ENCODE measurements at regions of chr11 and their contacts with region 1.

Region 1: GRCh38 chr11:130118636-130119387 is 40.8 kb upstream of the ST14 start:
- DNase-seq: peak; percentile 83
- H3K4me3 ChIP-seq: peak overlapping the region; percentile 61
- H3K27ac ChIP-seq: peak overlapping the region; percentile 90
- H3K4me1 ChIP-seq: peaks cover 89% of the 10 kb centered on the region
- CTCF ChIP-seq: no peak

Region 2: DNA sequence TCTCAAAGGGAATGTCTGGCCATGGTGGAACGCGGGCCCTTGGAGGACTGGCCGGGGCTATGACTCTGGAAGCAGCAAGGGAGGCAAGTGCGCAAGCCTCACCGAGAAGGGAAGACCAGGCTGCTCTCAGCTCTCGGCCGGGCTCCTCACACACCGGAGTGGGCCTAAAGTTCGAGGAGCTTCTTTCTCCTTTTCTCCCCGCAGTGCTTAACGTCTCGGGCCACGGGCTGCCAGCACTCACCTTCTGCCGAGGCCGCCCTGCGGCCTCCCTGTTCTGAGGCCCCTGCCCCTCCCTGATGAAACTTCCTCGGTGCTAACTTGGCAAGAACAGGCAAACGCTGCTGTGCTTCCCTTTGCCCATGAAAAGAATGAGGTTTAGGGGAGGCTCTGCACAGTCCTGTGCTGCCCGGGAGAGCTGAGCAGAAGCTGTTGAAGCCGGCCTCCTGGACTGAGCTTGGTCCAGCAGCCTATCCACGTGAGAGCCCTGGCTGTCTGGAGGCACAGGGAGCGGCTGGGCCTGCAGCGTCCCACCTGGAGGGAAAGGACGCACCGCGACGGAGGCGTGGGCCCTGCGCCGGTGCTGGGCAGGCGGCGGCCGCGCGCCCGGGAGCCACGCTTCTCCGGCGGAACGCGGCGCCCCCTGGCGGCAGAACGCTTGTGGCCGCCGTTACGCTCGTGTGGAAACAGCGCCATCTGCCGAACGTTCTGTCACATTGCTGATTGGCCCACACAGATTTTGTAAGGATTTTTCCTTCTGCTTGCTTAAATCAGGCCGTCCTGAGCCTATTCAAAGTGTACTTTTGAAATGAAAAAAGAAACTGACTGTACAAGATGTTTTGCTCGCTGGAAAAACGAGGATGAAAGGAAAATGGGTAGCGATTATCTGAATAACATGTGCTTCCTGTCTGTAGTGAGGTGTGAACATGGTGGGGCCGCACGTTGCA is 368.2 kb before region 1 on chr11:
- CTCF ChIA-PET with region 1: no interaction called
- POLR2A ChIA-PET with region 1: no interaction called
- intact Hi-C with region 1: no loop called
- DNase-seq: peak; percentile 75
- H3K4me3 ChIP-seq: no peak overlapping the region
- H3K27ac ChIP-seq: no peak overlapping the region
- H3K4me1 ChIP-seq: no peaks in the 10 kb centered on the region
- CTCF ChIP-seq: peak; percentile 93

Region 3: DNA sequence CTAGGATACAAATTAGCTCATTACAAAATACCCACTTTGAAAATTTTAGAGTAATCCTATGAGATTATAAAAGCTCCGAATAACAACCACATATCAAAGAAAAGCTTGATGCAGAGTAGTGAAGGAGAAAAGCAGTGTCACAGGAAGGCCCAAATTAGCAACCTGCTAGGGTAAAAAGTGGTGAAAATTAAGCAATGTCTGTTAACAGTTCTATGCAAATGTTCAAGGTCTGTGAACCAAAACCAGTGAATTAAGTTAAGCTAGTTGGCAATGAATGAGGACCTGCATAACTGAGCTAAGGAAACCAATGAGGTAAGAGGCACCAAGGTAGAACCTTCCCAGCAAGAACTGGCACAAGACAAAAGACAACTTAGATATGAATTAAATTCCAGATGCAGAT is 145.7 kb before region 1 on chr11:
- CTCF ChIA-PET with region 1: no interaction called
- POLR2A ChIA-PET with region 1: interaction called, 14 read pairs
- intact Hi-C with region 1: no loop called
- DNase-seq: peak; percentile 94
- H3K4me3 ChIP-seq: peak overlapping the region; percentile 60
- H3K27ac ChIP-seq: peak overlapping the region; percentile 98
- H3K4me1 ChIP-seq: peaks cover 88% of the 10 kb centered on the region
- CTCF ChIP-seq: no peak

Region 4: GRCh38 chr11:130069684-130070108 is 49.1 kb before region 1 on chr11 and contains the start of gene APLP2:
- CTCF ChIA-PET with region 1: no interaction called
- POLR2A ChIA-PET with region 1: interaction called, 28 read pairs
- intact Hi-C with region 1: loop called (anchors 1 kb)
- DNase-seq: peak; percentile 99
- H3K4me3 ChIP-seq: peak within 1 kb of the TSS; percentile 81
- H3K27ac ChIP-seq: peak within 1 kb of the TSS; percentile 57
- H3K4me1 ChIP-seq: peaks cover 49% of the 10 kb centered on the region
- CTCF ChIP-seq: no peak
- total RNA-seq, gene APLP2: 144 and 147 TPM in 2 replicates

Region 5: GRCh38 chr11:130159657-130160497 is 41.1 kb after region 1 on chr11 and contains the start of gene ST14:
- CTCF ChIA-PET with region 1: no interaction called
- POLR2A ChIA-PET with region 1: interaction called, 7 read pairs
- intact Hi-C with region 1: loop called (anchors 2 kb)
- DNase-seq: peak; percentile 70
- H3K4me3 ChIP-seq: peak within 1 kb of the TSS; percentile 74
- H3K27ac ChIP-seq: peak within 1 kb of the TSS; percentile 93
- H3K4me1 ChIP-seq: peaks cover 76% of the 10 kb centered on the region
- CTCF ChIP-seq: no peak; the same call in 1 of the 2 replicates
- total RNA-seq, gene ST14: 110 and 135 TPM in 2 replicates

Region 6: DNA sequence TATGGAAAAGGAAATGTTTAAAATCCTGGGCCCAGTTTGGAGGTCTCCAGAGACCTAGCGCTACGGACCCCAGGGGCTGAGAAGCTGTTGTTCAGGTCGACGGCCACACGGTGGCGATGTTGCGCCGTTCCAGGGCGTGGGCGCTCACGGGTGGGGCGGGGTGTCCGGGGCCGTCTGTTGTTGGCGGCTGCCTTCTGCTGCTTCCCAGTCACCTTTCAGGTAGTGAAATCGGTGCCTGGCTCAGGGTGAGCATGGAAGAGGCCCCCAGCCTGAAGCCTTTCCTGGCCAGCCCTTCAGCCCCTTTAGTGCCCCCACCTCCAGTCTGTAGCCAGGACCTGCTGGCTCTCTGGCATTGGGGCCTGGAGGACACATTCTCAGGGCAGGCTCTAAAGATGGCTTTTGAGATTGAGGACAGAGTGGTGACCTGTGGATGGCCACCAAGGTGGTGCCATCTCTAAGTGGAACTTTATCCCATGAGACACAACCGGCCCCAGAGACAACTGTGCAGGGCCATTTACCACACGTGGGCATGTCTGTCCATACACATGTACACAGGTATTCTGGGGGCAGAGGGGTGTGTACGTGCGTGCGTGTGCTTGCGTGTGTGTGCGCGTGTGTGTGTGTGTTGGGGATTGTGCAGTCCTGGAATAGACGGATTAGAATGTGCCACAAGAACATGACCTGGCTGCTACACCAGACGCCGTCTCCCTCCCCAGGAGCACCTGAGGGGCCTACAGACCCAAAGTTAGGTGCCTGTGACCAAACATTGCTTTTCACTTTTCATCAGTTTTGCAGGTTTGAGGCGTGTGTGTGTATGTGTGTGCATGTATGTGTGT is 94.5 kb after region 1 on chr11:
- CTCF ChIA-PET with region 1: no interaction called
- POLR2A ChIA-PET with region 1: no interaction called
- intact Hi-C with region 1: no loop called
- DNase-seq: peak; percentile 71
- H3K4me3 ChIP-seq: no peak overlapping the region
- H3K27ac ChIP-seq: no peak overlapping the region
- H3K4me1 ChIP-seq: peaks cover 9% of the 10 kb centered on the region
- CTCF ChIP-seq: peak; percentile 94